ENCODE measurements at regions of chr2 and their contacts with region 1.

Region 1: DNA sequence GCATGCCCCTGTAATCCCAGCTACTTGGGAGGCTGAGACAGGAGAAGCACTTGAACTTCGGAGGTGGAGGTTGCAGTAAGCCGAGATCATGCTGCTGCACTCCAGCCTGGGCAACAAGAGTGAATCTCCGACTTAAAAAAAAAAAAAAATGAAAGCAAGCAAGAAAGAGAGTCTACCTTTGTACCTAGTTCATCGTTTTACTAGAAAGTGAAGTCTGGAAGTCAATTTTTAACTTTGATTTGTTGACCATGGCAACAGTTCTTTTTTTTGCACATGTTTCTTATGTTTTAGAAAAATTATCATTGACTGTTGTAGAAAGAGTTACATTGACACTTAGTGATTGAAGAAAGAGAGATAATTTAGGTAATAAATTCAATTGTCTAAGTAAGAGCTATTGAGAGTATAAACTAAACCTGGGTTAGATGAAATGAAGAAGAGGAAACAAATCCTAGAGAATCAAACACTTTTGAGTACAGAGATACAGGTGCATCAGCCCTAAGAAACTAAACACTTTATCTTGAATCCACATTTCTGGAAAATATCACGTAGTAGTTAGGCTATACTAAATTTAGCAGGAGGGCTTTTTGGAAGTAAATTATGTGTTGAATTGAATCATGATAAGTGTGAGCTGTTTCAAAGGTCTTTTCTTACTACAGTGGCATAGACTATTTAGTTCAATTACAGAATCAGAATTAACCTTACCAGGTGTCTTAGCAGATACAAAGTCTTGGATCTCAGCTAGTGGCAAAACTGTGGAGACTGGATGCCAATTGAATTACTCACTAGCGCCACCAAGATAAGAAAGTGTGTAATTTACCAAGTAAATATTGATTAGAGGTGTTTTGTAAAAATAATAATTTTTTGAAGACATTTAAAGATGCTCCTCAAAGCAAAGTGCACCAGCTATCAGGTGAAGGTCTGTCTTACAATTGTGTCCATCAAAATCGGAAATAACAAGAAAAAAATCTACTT is 303.4 kb upstream of the NRXN1 start:
- DNase-seq: peak; percentile 10
- ATAC-seq: no peak
- H3K4me3 ChIP-seq: no peak overlapping the region
- H3K27ac ChIP-seq: no peak overlapping the region
- H3K4me1 ChIP-seq: no peaks in the 10 kb centered on the region
- H3K27me3 ChIP-seq: no peaks in the 10 kb centered on the region
- CTCF ChIP-seq: peak; percentile 37; the same call in 1 of the 2 replicates

Region 2: DNA sequence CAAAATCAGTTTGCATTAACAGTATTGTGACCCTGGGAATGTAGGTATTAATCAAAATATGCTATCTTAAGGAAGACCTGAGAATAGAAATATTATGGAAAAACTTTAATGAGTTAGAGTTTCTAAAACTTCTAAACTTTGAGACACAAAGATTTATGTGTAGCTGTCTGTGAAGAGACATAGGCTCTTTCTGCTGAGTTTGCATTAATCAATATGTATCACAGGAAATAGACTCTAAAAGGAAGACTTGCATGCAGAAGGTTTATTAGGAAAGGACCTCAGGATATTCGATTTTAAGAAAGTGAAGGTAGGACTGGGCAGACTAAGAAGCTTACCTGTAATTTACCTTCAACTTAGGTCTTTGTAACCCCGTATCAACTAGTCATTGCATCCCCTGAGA is 191.4 kb after region 1 on chr2:
- CTCF ChIA-PET with region 1: no interaction called
- POLR2A ChIA-PET with region 1: no interaction called
- intact Hi-C with region 1: no loop called
- DNase-seq: no peak
- ATAC-seq: no peak
- H3K4me3 ChIP-seq: no peak overlapping the region
- H3K27ac ChIP-seq: no peak overlapping the region
- H3K4me1 ChIP-seq: no peaks in the 10 kb centered on the region
- H3K27me3 ChIP-seq: no peaks in the 10 kb centered on the region
- CTCF ChIP-seq: no peak

Region 3: GRCh38 chr2:52356556-52356955 is 1021.2 kb after region 1 on chr2:
- CTCF ChIA-PET with region 1: no interaction called
- POLR2A ChIA-PET with region 1: interaction called, 10 read pairs
- intact Hi-C with region 1: no loop called
- DNase-seq: no peak
- ATAC-seq: no peak
- H3K4me3 ChIP-seq: no peak overlapping the region
- H3K27ac ChIP-seq: no peak overlapping the region
- H3K4me1 ChIP-seq: no peaks in the 10 kb centered on the region
- H3K27me3 ChIP-seq: no peaks in the 10 kb centered on the region
- CTCF ChIP-seq: no peak

Measured in PC-3 (cell line).